Head of caudate nucleus (tissue), 42 donors: ENCODE measurements at regions of chr19 and their contacts with region 1.

Region 1: DNA sequence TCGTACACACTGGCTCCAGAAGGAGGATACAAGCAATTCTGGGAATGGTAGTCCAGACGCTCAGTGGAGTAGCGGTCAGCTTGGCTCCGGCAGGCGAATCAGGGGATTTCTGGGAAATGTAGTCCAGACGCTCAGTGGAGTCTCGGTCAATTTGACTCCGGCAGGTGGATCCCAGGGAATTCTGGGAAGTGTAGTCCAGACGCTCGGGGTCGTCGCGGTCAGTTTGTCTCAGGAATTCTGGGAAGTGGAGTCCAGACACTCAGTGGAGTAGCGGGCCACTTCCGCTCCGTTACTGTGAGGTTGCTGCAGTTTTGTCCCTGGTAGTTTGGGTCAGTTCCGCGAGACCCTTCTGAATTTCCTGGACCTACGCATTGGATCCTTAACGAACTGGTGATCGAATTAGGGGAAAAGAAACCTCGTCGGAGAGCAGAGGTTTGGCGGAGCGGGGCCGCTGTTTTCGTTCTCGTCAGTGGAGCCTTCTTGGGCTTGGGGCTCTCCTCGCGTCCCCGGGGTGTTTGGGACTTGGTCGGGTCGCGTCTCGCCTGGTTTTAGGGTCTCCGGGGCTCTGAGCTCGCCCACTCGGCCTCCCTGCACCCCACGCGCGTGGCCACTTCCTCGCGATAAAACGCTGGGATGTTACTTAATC is at the start of gene ZNF225:
- DNase-seq: peak; percentile 92 to 100 (median 99)

Region 2: GRCh38 chr19:43983912-43984686 is 129.2 kb before region 1 on chr19 and contains the start of gene ZNF155:
- intact Hi-C with region 1: loop called (anchors 5 kb)
- DNase-seq: peak; percentile 76 to 98 (median 95)

Region 3: DNA sequence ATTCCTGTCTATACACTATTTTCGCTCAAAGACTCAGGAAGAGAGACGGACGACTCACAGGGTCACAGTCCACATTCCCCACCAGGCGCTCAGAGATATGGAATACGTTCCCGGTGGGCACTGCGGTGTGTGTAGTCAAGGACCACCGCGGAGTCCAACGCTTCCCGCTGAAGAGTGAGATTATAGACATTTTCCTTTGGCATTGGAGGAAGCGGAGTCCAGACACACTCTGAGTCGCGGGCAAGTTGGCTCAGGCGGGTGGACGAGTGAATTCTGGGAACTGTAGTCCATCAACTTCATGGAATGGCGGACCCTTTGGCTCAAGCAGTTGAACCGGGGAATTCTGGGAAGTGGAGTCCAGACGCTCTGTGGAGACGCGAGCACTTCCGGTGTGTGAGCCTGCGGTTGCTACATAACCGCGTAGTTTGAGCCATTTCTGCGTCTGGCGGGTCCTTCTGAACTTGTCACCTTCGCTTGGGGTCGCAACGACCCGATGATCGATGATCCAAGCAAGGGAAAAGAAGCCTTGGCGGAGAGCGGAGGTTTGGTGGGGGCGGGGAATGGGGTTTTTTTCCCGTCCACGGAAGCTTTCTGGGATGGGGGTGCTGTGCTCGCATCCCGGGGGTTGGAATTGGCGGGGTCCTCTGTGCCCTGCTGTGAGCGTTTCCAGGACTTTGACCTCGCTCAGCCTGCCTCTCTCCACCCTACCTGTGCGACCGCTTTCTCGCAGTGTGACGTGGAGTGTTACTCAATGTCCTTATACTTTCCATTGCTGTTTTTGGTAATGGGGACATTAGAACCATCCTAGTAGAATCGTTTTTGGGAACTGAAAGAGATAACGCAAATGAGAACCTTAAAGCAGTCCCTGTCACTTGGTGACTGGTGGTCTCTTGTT is 110.4 kb before region 1 on chr19 and contains the start of gene ZNF230:
- intact Hi-C with region 1: loop called (anchors 5 kb)
- DNase-seq: peak; percentile 85 to 98 (median 95)

Region 4: GRCh38 chr19:44024900-44025216 is 88.4 kb before region 1 on chr19:
- intact Hi-C with region 1: no loop called
- DNase-seq: no peak

Region 5: GRCh38 chr19:44051654-44052402 is 61.4 kb before region 1 on chr19 and contains the start of gene ZNF223:
- intact Hi-C with region 1: loop called (anchors 5 kb)
- DNase-seq: peak; percentile 92 to 99 (median 97)

Region 6: DNA sequence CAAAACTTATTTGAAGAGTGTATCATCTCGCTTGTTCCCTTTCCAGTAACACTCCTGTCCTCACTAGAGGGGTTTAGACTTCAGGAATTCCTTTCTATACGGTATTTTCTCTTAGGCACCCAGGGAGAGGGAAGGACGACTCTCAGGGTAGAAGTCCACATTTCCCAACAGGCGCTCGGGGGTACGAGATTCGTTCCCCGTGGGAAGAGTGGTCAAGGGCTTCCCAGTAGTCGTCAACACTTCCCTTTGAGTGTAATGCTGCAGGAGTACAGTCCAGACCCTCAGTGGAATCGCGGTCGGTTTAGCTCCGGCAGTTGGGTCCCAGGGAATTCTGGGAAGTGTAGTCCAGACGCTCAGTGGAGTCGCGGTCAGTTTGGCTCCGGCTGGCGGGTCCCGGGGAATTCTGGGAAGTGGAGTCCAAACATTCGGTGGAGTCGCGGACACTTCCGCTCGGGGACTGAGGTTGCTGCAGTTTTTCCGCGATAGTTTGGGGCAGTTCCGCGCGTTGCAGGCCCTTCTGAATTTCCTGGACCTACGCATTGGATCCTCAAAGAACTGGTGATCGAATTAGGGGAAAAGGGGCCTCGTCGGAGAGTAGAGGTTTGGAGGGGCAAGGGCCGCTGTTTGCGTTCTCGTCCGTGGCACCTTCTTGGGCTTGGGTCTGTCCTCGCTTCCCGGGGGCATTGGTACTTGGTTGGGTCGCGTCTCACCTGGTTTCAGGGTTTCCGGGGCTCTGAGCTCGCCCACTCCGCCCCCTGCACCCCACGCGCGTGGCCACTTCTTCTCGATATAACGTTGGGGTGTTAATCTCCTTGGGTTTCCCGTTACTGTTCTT is 19.1 kb before region 1 on chr19 and contains the start of gene ZNF224:
- intact Hi-C with region 1: loop called (anchors 1 kb)
- DNase-seq: peak; percentile 89 to 98 (median 95)

Region 7: DNA sequence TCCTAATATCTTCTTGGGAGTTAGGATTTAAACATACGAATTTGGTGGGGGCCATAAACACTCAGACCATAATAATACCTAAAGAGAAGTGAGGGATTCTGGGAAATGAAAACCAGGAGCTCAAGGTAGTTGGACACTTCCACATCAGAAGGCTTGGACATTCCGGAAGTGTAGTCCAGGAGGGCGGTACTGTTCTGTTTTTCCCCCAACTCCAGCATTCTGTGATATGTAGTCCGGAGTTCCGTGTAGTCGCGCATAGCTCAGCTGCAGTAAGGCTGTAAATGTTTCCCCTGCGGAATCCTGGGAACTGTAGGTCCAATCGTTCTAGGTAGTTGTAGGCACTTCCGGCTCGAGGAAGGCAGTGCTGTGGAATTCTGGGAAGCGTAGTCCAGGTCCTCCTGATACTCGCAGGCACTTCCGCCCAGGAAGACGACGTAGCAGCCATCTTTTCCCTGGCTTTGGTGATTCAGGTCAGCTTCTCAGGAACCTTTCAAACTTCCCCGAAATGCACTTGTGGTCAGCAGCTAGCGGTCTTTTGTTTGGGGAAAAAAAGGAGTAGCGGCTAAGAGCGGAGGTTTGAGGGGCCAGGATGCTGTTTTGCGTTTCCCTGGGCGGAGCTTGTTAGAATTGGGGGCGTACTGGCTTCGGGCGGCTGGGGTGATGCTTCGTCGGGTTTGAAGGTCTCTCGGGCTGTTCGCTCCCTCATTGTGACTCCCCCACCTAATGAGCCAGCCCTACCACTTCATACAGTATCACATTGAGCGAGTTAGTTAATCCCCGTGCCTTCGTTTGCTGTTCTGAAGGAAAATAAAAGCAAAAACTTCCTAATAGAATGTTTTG is 51.6 kb after region 1 on chr19 and contains the start of gene ZNF226:
- intact Hi-C with region 1: loop called (anchors 5 kb)
- DNase-seq: peak; percentile 85 to 99 (median 96)

Region 8: GRCh38 chr19:44207126-44207803 is 94.0 kb after region 1 on chr19:
- intact Hi-C with region 1: loop called (anchors 5 kb)
- DNase-seq: peak; percentile 80 to 97 (median 90)